Dorsolateral prefrontal cortex (tissue), 120 donors: ENCODE measurements at regions of chr16 and their contacts with region 1.

Region 1: DNA sequence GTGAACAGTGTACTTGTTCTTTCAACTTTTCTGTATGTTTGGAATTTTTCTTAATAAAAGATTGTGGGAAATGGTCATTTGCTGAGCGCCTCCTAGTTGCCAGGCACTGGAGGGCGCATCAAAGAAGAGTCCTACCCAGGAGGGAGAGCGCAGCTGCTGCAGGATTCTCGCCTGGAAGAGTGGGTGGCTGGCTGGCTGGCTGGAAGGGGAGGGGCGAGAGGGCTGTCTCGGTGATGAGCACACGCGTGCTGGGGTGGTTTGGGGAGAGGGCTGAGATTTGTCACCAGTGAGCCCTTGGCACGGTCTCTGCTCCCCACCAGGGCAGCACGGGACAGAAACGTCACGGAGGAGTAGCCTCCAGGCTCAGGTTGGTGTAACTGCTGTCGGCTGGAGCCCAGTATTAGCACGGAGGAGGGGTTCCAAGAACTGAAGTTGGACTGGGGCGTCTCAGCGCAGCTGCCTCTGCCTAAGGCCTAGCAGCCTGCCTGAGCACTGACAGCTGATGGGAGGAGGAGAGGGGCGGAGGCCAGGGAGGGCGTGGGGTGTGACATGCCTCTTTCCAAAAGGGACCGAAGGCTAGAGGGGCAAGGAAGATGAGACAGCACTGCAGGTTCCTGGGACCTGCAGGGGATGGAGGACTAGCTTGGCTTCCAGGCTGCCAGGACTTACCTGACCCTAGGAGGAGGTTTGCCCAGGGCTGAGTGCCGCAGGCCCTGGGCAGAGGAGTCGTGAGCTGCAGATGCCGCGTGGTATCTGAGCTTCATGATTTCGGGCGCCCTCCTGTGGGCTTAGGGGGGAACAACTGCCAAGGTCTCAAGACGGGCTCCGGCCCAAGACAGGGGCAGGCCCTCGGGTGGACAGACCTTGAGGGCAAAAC is 5.7 kb downstream of the LDHD start:
- DNase-seq: peak; percentile 85 to 93 (median 90)
- H3K4me3 ChIP-seq: peak overlapping the region in 58 of 59 donors; percentile 7 to 69 (median 48)
- H3K27ac ChIP-seq: peak overlapping the region; percentile 60 to 95 (median 86)
- H3K27me3 ChIP-seq: no peaks in the 10 kb centered on the region
- CTCF ChIP-seq: peak; percentile 55 to 97 (median 91)

Region 2: GRCh38 chr16:74813109-74813641 is 297.7 kb before region 1 on chr16:
- intact Hi-C with region 1: loop called in 1 of 2 experiments (anchors 5 kb)
- DNase-seq: peak; percentile 58 to 84 (median 78)
- H3K4me3 ChIP-seq: peak overlapping the region in 2 of 59 donors; percentile 10 to 23
- H3K27ac ChIP-seq: peak overlapping the region in 55 of 59 donors; percentile 4 to 90 (median 71)
- H3K27me3 ChIP-seq: no peaks in the 10 kb centered on the region
- CTCF ChIP-seq: peak; percentile 45 to 100 (median 95)

Region 3: GRCh38 chr16:74998481-74999218 is 112.2 kb before region 1 on chr16 and contains the start of gene ZNRF1:
- intact Hi-C with region 1: loop called (anchors 1 kb)
- DNase-seq: peak; percentile 54 to 77 (median 69)
- H3K4me3 ChIP-seq: peak within 1 kb of the TSS; percentile 72 to 98 (median 91)
- H3K27ac ChIP-seq: peak within 1 kb of the TSS; percentile 49 to 92 (median 84)
- H3K27me3 ChIP-seq: no peaks in the 10 kb centered on the region
- CTCF ChIP-seq: peak; percentile 73 to 94 (median 85)
- total RNA-seq, gene ZNRF1: 23.1 to 64.5 (median 38.6) TPM

Region 4: DNA sequence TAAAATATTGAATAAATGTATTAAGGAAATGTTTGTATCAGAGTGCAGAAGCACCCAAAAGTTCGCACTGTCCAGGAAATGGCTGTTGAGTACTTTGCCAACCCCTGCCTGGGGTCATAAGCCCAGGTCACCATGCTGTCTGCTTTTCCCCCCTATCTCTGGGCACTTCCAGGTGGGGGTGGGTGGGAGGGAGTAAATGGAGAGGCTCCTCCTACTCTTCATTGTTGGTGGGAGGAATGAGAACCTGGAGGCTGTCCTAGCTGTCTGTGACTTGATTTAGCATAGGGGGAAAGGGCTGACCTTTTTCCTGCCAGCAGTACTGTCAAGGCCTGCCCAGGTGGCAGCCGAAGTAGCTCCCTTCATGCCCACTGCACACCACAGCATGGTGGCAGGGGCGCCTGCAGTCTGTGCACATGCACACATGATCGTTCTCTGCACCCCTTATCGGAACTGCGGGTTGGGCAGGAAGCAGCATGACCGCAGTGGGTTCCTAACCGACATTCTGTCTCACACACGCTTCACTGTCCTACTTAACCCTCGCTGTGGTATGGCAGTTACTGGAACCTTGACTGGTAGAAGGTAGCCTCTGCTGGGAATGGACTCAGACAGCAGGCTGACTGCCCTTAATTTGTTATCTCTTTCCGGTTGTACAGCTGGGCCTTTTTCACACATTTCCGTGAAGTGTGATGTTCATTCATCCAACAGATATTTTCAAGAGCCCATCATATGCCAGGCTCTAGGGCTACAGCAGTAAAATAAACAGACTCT is 35.8 kb before region 1 on chr16:
- intact Hi-C with region 1: loop called in 1 of 2 experiments (anchors 5 kb)
- DNase-seq: peak in 2 of 10 donors; percentile 11 to 44
- H3K4me3 ChIP-seq: peak overlapping the region in 1 of 59 donors; percentile 6
- H3K27ac ChIP-seq: peak overlapping the region in 1 of 59 donors; percentile 21
- H3K27me3 ChIP-seq: no peaks in the 10 kb centered on the region
- CTCF ChIP-seq: no peak

Region 5: GRCh38 chr16:75099756-75100602 is 10.9 kb before region 1 on chr16:
- intact Hi-C with region 1: no loop called
- DNase-seq: no peak
- H3K4me3 ChIP-seq: no peak overlapping the region
- H3K27ac ChIP-seq: peak overlapping the region in 11 of 59 donors; percentile 2 to 65 (median 28)
- H3K27me3 ChIP-seq: no peaks in the 10 kb centered on the region
- CTCF ChIP-seq: no peak